BJ (cell line): ENCODE measurements at regions of chr19 and their contacts with region 1.

Region 1: GRCh38 chr19:3075895-3076431 is 13.7 kb upstream of the TLE5 start:
- DNase-seq: no peak
- H3K4me3 ChIP-seq: 0 out of 2 replicates have a peak overlapping the region, but pooled peaks have one; percentile 6
- H3K27me3 ChIP-seq: no peaks in the 10 kb centered on the region
- CTCF ChIP-seq: peak; percentile 88

Region 2: DNA sequence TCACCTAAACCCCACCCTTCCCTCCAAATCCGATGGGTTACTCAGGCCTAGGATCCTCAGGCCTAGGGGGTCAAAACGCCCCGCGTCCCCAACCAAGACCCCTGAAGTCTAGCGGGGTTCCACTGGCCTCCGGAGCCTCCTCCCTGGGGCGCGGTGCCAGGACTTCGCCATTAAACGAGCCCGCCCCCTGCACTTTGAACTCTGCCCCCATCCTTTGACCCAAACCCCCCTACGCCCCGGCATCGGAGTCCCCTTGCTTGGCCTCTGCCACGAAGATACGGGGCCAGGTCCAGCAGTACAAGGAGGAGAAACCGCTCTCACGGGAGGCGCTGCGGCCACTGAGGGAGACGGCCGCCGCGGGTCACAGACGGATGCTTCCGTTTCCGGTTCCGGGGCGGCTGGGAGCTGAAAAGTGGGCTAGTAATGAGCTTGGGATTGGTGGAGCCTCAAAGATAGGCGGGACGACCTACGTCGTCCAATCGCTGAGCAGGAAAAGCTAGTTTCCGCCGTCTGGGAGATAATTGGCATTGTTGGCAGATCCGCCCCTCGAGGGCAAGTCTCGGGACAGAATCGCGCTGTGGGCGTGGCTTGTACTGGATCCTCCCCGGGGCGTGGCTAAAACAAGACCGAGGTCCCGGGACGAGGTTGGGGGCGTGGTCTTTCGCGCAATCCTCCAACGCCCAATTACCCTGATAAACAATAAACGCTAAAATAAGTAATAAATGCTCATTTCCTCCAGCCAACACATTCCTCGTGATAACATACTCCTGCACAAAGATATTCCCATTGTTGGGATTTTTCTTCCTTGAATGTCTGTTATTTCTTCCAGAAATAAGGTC is 125.5 kb before region 1 on chr19:
- CTCF ChIA-PET with region 1: interaction called, 12 read pairs
- POLR2A ChIA-PET with region 1: no interaction called
- DNase-seq: peak; percentile 97
- H3K4me3 ChIP-seq: peak overlapping the region; percentile 77
- H3K27me3 ChIP-seq: no peaks in the 10 kb centered on the region; the same call in 1 of the 2 replicates
- CTCF ChIP-seq: no peak

Region 3: GRCh38 chr19:3065675-3066357 is 10.1 kb before region 1 on chr19:
- CTCF ChIA-PET with region 1: interaction called, 11 read pairs
- POLR2A ChIA-PET with region 1: no interaction called
- DNase-seq: no peak
- H3K4me3 ChIP-seq: no peak overlapping the region
- H3K27me3 ChIP-seq: no peaks in the 10 kb centered on the region
- CTCF ChIP-seq: no peak

Region 4: GRCh38 chr19:3100865-3101730 is 25.1 kb after region 1 on chr19:
- CTCF ChIA-PET with region 1: interaction called, 12 read pairs
- POLR2A ChIA-PET with region 1: no interaction called
- DNase-seq: no peak
- H3K4me3 ChIP-seq: no peak overlapping the region
- H3K27me3 ChIP-seq: no peaks in the 10 kb centered on the region
- CTCF ChIP-seq: no peak

Region 5: GRCh38 chr19:3125900-3126524 is 50.0 kb after region 1 on chr19:
- CTCF ChIA-PET with region 1: interaction called, 42 read pairs
- POLR2A ChIA-PET with region 1: no interaction called
- DNase-seq: no peak
- H3K4me3 ChIP-seq: no peak overlapping the region
- H3K27me3 ChIP-seq: no peaks in the 10 kb centered on the region
- CTCF ChIP-seq: peak; percentile 85